GM12878 (cell line): ENCODE measurements at regions of chr10 and their contacts with region 1.

Region 1: DNA sequence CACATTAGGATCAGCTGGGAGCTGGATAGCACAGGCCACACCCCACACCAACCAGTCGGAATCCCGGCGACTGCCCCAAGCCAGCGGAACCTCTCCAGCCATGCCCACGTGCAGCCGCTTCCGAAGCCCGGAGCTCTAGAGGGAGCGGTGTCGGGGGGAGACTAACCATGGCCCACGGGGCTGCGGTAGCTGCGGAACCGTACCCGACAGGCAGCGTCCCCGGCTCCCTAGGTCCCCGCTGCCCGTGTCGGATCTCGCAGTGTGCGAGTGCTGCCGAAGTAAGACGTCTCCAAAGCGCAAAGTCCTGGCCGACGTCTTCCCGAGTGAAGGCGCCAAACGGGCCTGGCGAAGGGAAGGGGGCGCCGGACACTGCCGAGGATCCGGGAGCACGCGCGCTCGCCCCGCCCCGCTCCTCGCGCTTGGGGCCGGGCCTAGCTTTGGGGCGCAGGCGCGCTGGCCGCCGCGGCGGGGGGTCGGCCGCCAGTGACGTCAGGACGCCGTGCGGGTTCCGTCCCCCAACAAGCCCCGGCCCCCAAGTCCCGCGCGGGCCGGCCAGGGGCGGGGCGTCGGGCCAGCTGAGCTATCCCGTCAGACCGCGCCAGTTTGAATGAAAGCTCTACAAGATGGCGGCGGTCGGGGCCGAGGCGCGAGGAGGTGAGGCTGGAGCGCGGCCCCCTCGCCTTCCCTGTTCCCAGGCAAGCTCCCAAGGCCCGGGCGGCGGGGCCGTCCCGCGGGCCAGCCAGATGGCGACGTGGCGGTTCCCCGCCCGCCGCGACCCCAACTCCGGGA is at the start of gene SUV39H2:
- DNase-seq: peak; percentile 64
- ATAC-seq: peak; percentile 94
- H3K4me3 ChIP-seq: peak within 1 kb of the TSS; percentile 89
- H3K27ac ChIP-seq: peak within 1 kb of the TSS; percentile 73
- H3K4me1 ChIP-seq: peaks cover 5% of the 10 kb centered on the region; the same call in 1 of the 2 replicates
- H3K27me3 ChIP-seq: no peaks in the 10 kb centered on the region
- CTCF ChIP-seq: no peak
- EP300 ChIP-seq: no peak
- POLR2A ChIP-seq: peak; percentile 88
- RAD21 ChIP-seq: no peak
- polyA plus RNA-seq, gene SUV39H2: 26.5 to 40.3 TPM

Region 2: DNA sequence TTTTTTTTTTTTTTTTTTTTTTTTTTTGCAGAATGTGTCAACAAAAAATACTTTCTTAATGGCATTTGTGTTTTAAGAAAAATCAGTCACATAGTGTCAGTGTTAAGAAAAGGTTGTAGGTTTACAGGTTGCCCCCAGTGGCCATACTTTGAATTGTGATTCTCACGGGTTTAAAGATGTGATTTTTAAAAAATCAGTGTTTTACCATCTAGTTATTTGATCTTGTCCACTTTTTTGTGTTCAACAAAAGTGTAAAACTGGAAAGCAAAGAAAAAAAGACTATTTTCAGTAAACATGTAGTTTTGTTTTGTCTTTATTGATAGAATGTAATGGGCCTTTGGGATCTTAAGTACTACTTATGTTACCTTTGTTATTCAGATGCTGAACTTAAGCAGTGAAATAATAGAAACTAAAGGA is 25.9 kb after region 1 on chr10:
- CTCF ChIA-PET with region 1: interaction called, 9 read pairs
- POLR2A ChIA-PET with region 1: no interaction called
- RAD21 ChIA-PET with region 1: no interaction called
- SMC1A ChIA-PET with region 1: interaction called, 12 read pairs
- in situ Hi-C with region 1: no loop called
- intact Hi-C with region 1: no loop called
- DNase-seq: no peak
- ATAC-seq: peak; percentile 88
- H3K4me3 ChIP-seq: no peak overlapping the region
- H3K27ac ChIP-seq: no peak overlapping the region
- H3K4me1 ChIP-seq: no peaks in the 10 kb centered on the region
- H3K27me3 ChIP-seq: no peaks in the 10 kb centered on the region
- CTCF ChIP-seq: peak; percentile 41 to 57 (median 51)
- EP300 ChIP-seq: no peak
- POLR2A ChIP-seq: no peak
- RAD21 ChIP-seq: peak; percentile 31; the same call in 1 of the 2 replicates

Region 3: GRCh38 chr10:14926722-14927416 is 48.4 kb after region 1 on chr10:
- CTCF ChIA-PET with region 1: interaction called, 5 read pairs
- POLR2A ChIA-PET with region 1: interaction called, 3 read pairs
- RAD21 ChIA-PET with region 1: interaction called, 8 read pairs
- SMC1A ChIA-PET with region 1: interaction called, 4 read pairs
- in situ Hi-C with region 1: no loop called
- intact Hi-C with region 1: loop called (anchors 2 kb)
- DNase-seq: peak; percentile 74
- ATAC-seq: peak; percentile 99
- H3K4me3 ChIP-seq: peak overlapping the region; percentile 60; the same call in 1 of the 2 replicates
- H3K27ac ChIP-seq: peak overlapping the region; percentile 63
- H3K4me1 ChIP-seq: peaks cover 22% of the 10 kb centered on the region
- H3K27me3 ChIP-seq: no peaks in the 10 kb centered on the region
- CTCF ChIP-seq: no peak
- EP300 ChIP-seq: peak in 1 of 2 experiments; percentile 73; a peak in 2 of 4 replicates
- POLR2A ChIP-seq: no peak
- RAD21 ChIP-seq: no peak

Region 4: DNA sequence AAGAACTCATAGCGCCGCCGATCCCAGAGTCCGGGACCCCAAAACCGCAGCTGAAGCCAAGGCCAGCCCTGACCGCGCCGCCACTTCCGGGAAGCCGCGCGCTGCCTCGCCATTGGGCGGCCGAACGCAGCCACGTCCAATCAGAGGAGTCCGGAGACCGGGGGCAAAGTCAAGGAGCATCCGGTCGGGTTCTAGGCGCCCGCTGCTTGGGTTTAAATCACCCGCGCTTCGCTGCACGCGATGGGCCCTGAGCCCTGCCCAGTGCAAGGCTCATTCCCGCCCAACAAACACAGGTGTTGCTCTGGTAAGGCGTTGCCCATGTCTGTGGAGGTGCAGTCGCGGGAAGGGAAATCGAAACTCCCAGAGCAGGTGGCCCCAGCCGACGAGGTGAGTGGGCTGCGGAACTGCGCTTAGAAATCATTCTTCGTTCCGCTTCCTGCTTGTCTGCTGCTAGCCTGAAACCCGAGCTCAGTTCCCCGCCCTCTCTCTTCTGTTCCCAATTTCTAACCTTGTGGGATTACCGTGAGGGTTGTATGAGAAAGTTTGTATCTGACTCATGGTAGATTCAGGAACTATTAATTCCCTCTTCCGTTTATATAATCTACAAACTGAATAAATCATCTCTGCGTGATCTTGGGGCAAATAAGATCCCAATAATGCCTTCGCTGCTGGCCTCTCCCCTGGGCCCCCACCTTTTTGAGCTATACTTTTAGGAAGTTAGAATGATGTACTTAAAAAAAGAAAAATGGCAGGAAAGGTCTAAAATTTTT is 75.7 kb after region 1 on chr10 and contains the start of gene DCLRE1C:
- CTCF ChIA-PET with region 1: interaction called, 17 read pairs
- POLR2A ChIA-PET with region 1: interaction called, 17 read pairs
- RAD21 ChIA-PET with region 1: interaction called, 10 read pairs
- SMC1A ChIA-PET with region 1: interaction called, 23 read pairs
- in situ Hi-C with region 1: no loop called
- intact Hi-C with region 1: loop called (anchors 2 kb)
- DNase-seq: peak; percentile 82
- ATAC-seq: peak; percentile 86
- H3K4me3 ChIP-seq: peak within 1 kb of the TSS; percentile 91
- H3K27ac ChIP-seq: peak within 1 kb of the TSS; percentile 98
- H3K4me1 ChIP-seq: peaks cover 21% of the 10 kb centered on the region
- H3K27me3 ChIP-seq: no peaks in the 10 kb centered on the region
- CTCF ChIP-seq: no peak
- EP300 ChIP-seq: peak in 1 of 2 experiments; percentile 56; a peak in 2 of 4 replicates
- POLR2A ChIP-seq: peak; percentile 80
- RAD21 ChIP-seq: no peak
- polyA plus RNA-seq, gene DCLRE1C: 15.7 to 26.2 TPM

Region 5: DNA sequence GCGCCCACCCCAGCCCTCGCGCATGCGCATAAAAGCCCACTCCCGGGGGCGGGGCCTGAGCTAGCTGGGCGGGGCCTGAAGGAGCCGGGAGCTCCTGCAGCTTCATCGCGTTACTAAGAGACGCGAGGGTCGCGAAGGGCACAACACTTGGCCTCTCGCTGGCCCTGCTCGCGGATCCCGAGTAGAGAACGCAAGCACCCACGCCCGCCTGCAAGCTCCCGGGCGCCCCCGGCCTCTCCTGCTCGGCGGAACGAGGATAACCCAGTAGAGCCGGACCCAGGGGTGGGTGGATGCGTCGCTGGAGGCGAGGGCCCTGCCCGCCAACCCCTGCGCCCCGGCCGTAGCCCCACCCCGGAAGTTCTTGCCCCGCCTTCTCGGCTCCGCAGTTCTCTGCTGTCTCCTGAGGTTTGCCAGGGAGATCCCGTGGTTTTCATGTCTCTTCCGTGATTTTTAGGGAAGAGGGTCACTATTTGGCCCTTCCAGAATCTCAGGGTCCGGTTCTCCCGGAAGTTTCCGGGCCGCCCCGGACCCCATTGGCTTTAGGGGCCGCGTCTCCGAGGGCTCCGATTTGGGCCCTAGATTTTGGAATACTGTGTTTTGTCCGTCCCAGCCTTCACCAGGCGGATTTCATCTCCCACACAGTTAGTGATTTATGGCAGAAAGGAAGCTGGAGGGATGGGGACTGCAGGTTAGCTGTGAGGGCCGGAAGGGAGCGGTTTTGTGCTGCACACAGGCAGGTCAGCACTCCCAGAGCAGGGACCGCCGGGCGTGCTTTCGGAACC is 81.0 kb after region 1 on chr10 and contains the start of gene MEIG1:
- CTCF ChIA-PET with region 1: interaction called, 4 read pairs
- POLR2A ChIA-PET with region 1: interaction called, 17 read pairs
- RAD21 ChIA-PET with region 1: interaction called, 3 read pairs
- SMC1A ChIA-PET with region 1: interaction called, 6 read pairs
- in situ Hi-C with region 1: no loop called
- intact Hi-C with region 1: loop called (anchors 2 kb)
- DNase-seq: peak; percentile 60
- ATAC-seq: peak; percentile 93
- H3K4me3 ChIP-seq: peak within 1 kb of the TSS; percentile 72
- H3K27ac ChIP-seq: peak within 1 kb of the TSS; percentile 94
- H3K4me1 ChIP-seq: peaks cover 5% of the 10 kb centered on the region
- H3K27me3 ChIP-seq: no peaks in the 10 kb centered on the region
- CTCF ChIP-seq: no peak
- EP300 ChIP-seq: 0 out of 4 replicates have a peak, but pooled peaks of 1 of the 2 experiments have one; percentile 8
- POLR2A ChIP-seq: peak; percentile 22
- RAD21 ChIP-seq: no peak
- polyA plus RNA-seq, gene MEIG1: 0.79 to 0.80 TPM